HEK293 (cell line): ENCODE measurements at regions of chr3 and their contacts with region 1.

Region 1: DNA sequence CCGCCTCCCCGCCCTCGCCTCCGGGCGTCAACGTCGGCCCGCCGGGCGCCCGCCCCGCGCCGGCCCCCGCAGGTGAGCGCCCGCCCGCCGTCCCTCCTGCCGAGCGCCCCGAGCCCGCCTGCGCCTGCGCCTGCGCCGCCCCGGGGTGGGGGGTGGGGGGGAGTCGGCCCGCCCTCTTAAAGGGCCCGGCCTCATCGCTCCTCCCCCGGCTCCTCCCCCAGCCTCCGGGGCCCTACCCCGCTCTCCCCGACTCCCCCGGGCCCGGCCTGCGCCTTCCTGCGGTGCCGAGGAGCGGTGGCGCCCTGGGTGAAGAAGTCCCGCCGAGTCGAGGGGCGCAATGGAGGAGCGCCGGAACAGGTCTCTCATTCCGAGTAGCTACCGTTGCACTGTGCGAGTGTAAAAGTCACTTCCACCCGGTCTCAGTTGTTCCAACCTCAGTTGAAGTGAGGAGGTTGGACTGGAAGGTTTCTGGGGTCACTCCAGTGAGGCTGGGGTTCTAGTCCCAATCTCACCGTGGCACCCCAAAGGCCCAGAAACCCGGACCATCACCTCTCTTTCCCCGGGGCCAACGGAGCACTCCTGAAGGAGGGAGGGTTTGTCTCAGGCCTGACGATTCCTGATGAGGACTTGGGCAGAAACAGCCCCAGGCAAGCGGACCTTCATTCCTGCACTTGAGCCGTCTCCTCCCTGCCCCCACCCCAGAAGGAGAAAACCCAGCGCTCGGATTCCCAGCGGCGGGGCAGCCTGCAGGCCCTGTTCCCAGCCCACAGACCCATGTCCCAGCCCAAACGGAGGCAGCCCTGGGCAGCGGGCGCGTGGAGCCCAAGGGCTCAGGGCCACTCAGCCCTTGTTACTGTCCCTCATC is 1.5 kb upstream of the TNK2 start:
- H3K4me3 ChIP-seq: peak overlapping the region; percentile 51
- H3K27ac ChIP-seq: peak overlapping the region; percentile 48; the same call in 1 of the 2 replicates
- H3K4me1 ChIP-seq: peaks cover 20% of the 10 kb centered on the region
- CTCF ChIP-seq: no peak

Region 2: DNA sequence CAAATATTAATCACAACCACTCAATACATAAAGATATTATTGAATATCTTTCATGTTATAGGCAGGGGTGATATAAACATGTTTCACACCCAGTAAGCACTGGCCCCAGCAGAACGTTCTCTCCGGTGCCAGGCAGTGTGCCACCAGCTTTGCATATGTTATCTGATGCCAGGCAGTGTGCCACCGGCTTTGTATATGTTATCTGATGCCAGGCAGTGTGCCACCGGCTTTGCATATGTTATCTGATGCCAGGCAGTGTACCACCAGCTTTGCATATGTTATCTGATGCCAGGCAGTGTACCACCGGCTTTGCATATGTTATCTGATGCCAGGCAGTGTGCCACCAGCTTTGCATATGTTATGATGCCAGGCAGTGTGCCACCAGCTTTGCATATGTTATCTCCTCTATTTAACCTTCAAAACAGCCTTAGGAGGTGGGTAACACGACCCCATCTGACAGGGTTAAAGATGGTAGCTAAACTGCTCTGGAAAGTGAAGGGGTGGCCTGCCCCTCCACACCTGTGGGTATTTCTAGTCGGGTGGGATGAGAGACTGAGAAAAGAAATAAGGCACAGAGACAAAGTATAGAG is 182.2 kb before region 1 on chr3:
- CTCF ChIA-PET with region 1: no interaction called
- POLR2A ChIA-PET with region 1: no interaction called
- H3K4me3 ChIP-seq: no peak overlapping the region
- H3K27ac ChIP-seq: no peak overlapping the region
- H3K4me1 ChIP-seq: no peaks in the 10 kb centered on the region
- CTCF ChIP-seq: no peak

Region 3: DNA sequence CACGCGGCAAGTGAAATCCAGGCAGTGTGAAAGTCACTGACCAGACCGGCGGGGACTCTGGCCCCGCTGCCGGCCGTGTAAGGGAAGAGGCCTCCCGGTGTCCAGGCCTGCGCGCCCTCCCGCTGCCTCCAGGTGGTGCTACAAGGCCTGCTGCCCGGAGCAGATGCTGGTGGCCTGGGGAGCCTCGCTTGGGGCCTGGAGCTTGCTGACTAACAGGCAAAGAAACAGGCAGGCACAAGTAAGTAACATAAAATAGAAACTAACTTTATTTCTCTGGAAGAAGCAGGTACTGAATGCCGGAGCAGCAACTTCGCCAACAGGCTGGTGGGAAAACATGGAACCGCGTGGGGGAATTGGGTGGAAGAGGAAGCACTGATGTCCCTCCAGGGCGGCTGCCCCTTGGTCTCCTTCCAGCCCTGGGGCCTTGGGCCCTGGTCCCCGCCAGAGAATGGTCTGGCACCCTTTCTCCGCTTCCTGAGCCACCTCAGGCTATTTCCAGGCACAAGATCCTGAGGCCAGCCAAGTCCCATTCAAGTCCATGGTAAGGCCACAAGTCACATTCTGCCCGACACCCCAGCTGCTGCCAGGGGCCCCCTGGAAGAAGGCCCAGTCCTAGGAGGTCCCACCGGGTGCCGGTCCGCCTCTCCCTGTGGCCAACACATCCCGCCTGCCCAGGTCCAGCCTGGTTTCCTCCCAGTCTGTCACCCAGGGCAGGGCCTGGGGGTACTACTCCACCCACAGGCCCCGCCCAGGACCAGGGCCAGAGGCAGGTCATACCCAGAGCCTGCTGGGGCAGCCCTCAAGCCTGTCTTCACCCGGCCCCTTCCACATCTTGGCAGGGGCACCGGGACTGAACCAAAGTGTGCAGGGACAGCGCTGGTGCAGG is 46.5 kb before region 1 on chr3:
- CTCF ChIA-PET with region 1: interaction called, 19 read pairs
- POLR2A ChIA-PET with region 1: no interaction called
- H3K4me3 ChIP-seq: no peak overlapping the region
- H3K27ac ChIP-seq: no peak overlapping the region
- H3K4me1 ChIP-seq: no peaks in the 10 kb centered on the region
- CTCF ChIP-seq: 0 out of 2 replicates have a peak, but pooled peaks have one; percentile 41